OCI-LY7 (cell line): ENCODE measurements at regions of chrX and their contacts with region 1.

Region 1: GRCh38 chrX:19747652-19748610 is 139.5 kb downstream of the SH3KBP1 start:
- DNase-seq: peak; percentile 83
- H3K4me3 ChIP-seq: peak overlapping the region; percentile 53
- H3K27ac ChIP-seq: peak overlapping the region; percentile 97
- H3K4me1 ChIP-seq: peaks cover 98% of the 10 kb centered on the region
- CTCF ChIP-seq: no peak

Region 2: DNA sequence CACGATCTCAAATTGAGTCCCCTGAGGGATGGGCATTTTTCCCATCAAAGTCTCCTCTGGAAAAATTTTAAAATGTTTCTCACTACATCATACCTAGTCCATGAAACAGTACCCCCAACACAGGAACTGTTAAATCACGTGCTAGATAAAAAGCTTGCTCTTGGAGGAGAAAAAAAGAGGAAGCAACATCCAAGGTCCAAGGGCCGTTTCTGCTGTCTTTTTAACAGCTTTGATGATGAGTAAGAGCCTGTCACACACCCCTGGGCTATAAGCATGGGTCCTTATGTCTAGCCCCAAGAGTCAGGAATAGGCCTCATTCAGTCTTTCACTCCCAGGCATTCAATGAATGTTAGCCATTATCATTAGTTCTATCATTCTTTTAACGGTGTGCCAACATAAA is 10.6 kb after region 1 on chrX:
- CTCF ChIA-PET with region 1: interaction called, 5 read pairs
- POLR2A ChIA-PET with region 1: interaction called, 38 read pairs
- intact Hi-C with region 1: no loop called
- DNase-seq: peak; percentile 76
- H3K4me3 ChIP-seq: peak overlapping the region; percentile 52
- H3K27ac ChIP-seq: peak overlapping the region; percentile 97
- H3K4me1 ChIP-seq: peaks cover 98% of the 10 kb centered on the region
- CTCF ChIP-seq: no peak

Region 3: DNA sequence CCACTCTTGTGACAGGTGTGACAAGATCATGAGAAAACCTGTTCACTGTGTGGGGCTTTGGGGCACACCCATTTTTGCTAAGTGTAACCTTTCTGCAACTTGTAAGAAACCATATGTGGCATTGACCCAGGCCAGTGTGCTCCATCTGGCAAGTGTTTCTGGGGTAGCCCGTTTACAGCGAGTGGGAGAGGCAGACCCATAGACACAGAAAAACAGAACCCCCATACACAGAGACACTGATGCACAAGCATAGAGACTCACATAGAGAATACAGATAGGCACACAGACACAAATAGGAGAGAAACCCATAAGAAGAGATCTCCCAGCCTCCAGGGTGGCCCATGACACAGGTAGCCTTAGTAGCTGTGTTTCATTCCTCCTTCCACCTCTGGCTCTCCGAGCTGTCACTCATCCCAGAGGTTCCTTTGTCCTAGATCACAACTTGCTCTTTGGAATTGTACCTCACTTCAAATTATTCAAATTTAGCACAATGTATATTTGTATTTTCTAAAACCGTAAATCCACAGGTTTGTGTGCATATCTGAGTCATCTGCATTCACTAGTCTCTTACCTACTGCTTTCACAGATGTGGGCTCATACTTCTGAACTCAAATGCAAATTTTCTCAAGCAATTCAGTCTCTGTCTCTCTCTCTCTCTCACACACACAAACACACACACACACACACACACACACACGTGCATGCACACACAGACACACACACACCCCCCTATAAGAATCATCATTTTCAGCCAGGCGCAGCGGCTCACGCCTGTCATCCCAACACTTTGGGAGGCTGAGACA is 25.1 kb after region 1 on chrX:
- CTCF ChIA-PET with region 1: interaction called, 3 read pairs
- POLR2A ChIA-PET with region 1: interaction called, 15 read pairs
- intact Hi-C with region 1: loop called (anchors 2 kb)
- DNase-seq: peak; percentile 52
- H3K4me3 ChIP-seq: peak overlapping the region; percentile 62
- H3K27ac ChIP-seq: peak overlapping the region; percentile 100
- H3K4me1 ChIP-seq: peaks cover 89% of the 10 kb centered on the region
- CTCF ChIP-seq: no peak

Region 4: DNA sequence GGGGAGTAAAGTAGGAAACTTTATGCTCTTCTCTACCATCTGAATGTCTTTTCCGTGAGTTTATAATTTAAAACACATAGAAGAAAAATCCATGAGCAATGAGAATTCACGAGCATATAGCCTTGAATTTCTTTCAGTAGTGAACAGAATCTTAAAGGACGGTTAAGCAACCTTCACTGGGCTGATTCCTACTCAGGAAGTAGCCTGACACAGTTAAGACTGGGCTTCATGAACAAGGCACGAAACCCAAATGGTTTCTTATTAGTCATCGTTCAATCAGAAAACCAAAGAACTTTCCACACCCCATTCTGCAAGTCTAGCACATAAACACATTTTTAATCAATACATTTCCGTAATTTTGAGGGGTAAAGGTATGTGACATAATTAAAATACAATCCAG is 43.6 kb after region 1 on chrX:
- CTCF ChIA-PET with region 1: no interaction called
- POLR2A ChIA-PET with region 1: interaction called, 5 read pairs
- intact Hi-C with region 1: loop called (anchors 5 kb)
- DNase-seq: no peak
- H3K4me3 ChIP-seq: no peak overlapping the region
- H3K27ac ChIP-seq: peak overlapping the region; percentile 57
- H3K4me1 ChIP-seq: peaks cover 58% of the 10 kb centered on the region
- CTCF ChIP-seq: no peak

Region 5: GRCh38 chrX:19840899-19841648 is 93.1 kb after region 1 on chrX:
- CTCF ChIA-PET with region 1: no interaction called
- POLR2A ChIA-PET with region 1: interaction called, 7 read pairs
- intact Hi-C with region 1: loop called (anchors 2 kb)
- DNase-seq: peak; percentile 55
- H3K4me3 ChIP-seq: peak overlapping the region; percentile 46
- H3K27ac ChIP-seq: peak overlapping the region; percentile 81
- H3K4me1 ChIP-seq: peaks cover 51% of the 10 kb centered on the region
- CTCF ChIP-seq: no peak

Region 6: GRCh38 chrX:20001588-20001987 is 253.7 kb after region 1 on chrX:
- CTCF ChIA-PET with region 1: no interaction called
- POLR2A ChIA-PET with region 1: no interaction called
- intact Hi-C with region 1: no loop called
- DNase-seq: no peak
- H3K4me3 ChIP-seq: no peak overlapping the region
- H3K27ac ChIP-seq: no peak overlapping the region
- H3K4me1 ChIP-seq: peaks cover 8% of the 10 kb centered on the region
- CTCF ChIP-seq: no peak